Posterior cingulate gyrus (tissue), 11 donors: ENCODE measurements at regions of chr1 and their contacts with region 1.

Region 1: DNA sequence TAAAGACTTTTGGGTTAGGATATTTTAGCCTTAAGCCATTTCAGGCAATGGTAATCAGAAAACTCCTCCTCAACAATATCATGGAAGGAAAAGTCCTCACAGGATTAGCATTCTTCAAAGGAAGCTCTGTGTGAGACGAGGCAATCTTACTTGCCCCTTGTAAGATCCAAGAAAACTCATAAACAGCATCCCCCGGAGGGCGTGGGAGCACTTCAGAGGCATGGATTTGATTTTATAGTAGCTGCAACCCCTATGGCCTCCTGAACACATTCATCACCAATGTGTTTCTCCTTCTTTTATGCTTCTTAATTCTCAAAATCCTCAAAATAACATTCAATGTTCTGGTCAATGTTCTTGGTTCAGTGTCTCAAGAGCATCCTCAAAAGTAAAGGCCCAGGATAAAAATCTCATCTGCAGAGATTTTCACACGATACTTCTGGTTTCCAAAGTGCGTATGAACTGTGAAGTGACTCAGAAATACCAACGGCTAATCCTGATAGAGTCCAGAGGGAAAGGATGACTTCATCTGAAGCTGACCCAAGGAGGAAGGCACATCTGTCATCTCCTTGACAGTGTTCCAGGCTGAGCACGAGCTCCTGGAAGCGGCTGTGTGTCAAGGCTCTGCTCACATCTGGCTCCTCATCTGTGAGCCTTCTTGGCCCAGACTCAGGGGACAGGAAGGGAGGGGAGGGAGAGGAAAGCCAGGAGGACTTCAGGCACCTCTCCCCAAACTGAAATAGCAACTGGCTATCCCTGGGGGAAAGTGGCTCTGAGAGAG is 49.3 kb upstream of the PSEN2 start:
- DNase-seq: no peak

Region 2: GRCh38 chr1:226786550-226786949 is 34.6 kb before region 1 on chr1:
- intact Hi-C with region 1: loop called (anchors 5 kb)
- DNase-seq: no peak

Region 3: GRCh38 chr1:226798427-226799411 is 22.4 kb before region 1 on chr1:
- intact Hi-C with region 1: no loop called
- DNase-seq: no peak

Region 4: GRCh38 chr1:227140376-227140775 is 319.2 kb after region 1 on chr1:
- intact Hi-C with region 1: no loop called
- DNase-seq: no peak